Activated T-helper 2 cell treated with anti-CD3 and anti-CD28 coated beads, Interferon-gamma antibody, Interleukin-2, Interleukin-4, amounts not matched to agents 10 μg/mL and 5 μg/mL and 100 μg/mL, durations not matched to agents 14 hours and 24 hours and 36 hours (primary cell): ENCODE measurements at regions of chr19 and their contacts with region 1.

Region 1: DNA sequence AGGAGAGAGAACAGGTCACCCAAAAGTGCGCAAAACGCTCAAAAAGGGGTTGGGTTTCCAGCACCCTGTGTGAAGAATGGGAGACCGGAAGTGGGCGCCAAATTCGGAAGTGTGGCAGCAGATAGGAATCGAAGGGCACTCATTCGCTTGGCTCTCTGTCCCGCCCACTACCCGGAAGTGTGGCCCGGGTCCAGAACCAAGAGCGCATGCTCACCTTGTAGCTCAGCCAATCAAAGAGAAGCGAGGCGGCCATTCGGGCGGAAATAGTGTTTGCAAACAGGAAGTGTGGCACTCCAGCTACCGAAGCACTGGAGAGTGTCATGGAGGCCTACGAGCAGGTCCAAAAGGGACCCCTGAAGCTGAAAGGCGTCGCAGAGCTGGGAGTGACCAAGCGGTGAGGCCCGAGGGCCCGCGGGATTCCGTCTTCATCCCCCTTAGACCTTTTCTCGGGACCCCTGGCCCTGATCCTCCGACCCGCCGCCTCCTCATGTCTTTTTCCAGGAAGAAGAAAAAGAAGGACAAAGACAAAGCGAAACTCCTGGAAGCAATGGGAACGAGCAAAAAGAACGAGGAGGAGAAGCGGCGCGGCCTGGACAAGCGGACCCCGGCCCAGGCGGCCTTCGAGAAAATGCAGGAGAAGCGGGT is at the start of gene FAM32A:
- DNase-seq: peak; percentile 99
- H3K4me3 Mint-ChIP-seq: peak within 1 kb of the TSS; percentile 95
- H3K27ac Mint-ChIP-seq: peak within 1 kb of the TSS; percentile 94
- H3K4me1 Mint-ChIP-seq: peaks cover 14% of the 10 kb centered on the region
- H3K27me3 Mint-ChIP-seq: no peaks in the 10 kb centered on the region
- total RNA-seq, gene FAM32A: 65.6 and 68.6 TPM in 2 replicates

Region 2: GRCh38 chr19:15836595-15837337 is 348.5 kb before region 1 on chr19:
- intact Hi-C with region 1: loop called (anchors 2 kb)
- DNase-seq: peak; percentile 97
- H3K4me3 Mint-ChIP-seq: peak overlapping the region; percentile 94
- H3K27ac Mint-ChIP-seq: peak overlapping the region; percentile 99
- H3K4me1 Mint-ChIP-seq: peaks cover 26% of the 10 kb centered on the region
- H3K27me3 Mint-ChIP-seq: no peaks in the 10 kb centered on the region

Region 3: DNA sequence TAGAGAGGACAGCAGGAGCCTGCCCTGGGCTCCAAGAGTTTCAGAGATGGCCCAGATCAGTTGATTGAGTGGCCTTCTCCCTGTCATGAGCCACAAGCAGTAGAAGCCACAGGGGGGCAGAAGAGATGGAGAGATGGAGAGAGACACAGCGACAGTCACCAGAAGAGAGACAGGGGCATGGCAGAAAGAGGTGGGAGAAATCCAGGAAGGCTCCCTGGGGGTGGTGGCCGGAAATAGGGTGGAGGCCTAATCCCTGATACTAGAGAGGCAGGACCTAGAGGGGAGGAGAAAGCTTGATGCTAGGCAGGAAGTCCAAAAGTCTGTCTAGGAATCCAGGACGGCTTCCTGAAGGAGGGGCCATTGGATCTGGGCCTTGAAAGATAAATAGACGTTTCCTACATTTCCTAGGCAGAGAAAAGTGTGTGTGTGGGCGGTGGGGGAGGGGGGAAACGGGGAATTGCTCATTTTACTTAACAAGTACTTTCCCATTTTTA is 118.6 kb before region 1 on chr19:
- intact Hi-C with region 1: loop called (anchors 2 kb)
- DNase-seq: no peak
- H3K4me3 Mint-ChIP-seq: no peak overlapping the region
- H3K27ac Mint-ChIP-seq: peak overlapping the region; percentile 28
- H3K4me1 Mint-ChIP-seq: peaks cover 21% of the 10 kb centered on the region
- H3K27me3 Mint-ChIP-seq: no peaks in the 10 kb centered on the region

Region 4: DNA sequence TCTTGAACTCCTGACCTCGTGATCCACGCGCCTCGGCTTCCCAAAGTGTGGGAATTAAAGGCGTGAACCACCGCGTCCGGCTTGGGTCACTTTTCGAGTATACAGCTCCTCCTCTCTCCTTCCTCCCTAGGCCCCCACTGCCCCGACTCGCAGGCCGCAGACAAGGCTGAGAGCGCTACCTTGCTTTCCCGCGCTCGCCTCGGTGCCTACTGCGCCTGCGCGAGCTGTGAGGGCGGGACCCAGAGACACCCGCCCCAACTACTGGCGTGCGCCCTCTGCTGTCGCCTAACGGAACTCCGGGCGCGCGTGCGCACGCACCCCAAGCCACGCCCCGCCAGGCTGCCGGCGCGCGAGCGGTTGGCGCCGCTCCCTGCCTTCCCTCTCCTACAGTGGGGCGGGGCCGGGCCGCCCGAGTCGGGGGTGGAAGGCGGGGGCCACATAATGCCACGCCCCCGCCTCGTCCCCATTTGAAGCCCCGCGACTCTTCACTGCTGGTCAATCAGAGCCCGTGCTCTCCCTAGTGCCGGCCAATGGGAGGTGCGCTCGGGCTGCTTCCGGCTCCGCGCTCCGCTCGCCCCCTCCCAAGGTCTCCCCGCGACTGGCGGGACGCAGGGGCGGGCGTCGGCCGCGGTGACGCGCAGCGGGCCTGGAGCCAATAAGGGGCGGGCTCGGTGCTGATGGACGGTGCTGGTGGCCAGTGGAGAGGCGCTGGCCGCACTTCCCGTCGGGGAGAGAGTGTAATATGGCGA is 73.9 kb before region 1 on chr19 and contains the start of gene RAB8A:
- intact Hi-C with region 1: loop called (anchors 1 kb)
- DNase-seq: peak; percentile 99
- H3K4me3 Mint-ChIP-seq: peak within 1 kb of the TSS; percentile 99
- H3K27ac Mint-ChIP-seq: peak within 1 kb of the TSS; percentile 95
- H3K4me1 Mint-ChIP-seq: peaks cover 29% of the 10 kb centered on the region
- H3K27me3 Mint-ChIP-seq: no peaks in the 10 kb centered on the region
- total RNA-seq, gene RAB8A: 256 and 261 TPM in 2 replicates

Region 5: DNA sequence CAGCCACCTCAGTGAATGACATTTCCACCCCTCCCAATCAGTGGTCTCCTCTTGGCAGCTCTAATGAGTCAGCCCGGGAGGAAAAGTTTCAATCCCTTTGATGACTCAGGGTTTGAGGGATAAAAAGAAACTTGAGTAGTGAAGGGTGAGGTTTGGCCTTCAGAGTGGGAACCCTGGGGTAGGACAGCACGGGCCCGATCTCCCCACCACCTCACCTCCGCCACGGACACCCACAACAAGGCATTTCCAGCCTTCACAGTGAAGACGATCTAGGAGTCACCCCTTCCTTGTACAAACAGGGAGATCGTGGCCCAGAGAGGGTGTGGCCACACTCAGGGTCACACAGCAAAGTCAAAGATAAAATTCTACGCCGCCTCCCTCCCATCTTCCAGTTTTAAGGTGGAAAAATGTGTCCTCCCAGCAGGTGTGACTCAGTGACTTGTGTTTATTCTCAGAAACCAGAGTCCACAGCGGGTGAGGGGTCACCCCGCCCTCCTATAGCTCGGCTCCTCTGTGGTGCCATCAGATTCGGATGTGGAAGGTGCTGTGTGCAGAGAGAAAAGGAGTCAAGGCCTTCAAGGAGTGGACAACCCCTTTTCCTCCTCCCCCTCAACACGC is 24.2 kb before region 1 on chr19:
- intact Hi-C with region 1: loop called (anchors 2 kb)
- DNase-seq: no peak
- H3K4me3 Mint-ChIP-seq: peak overlapping the region; percentile 22
- H3K27ac Mint-ChIP-seq: peak overlapping the region; percentile 80
- H3K4me1 Mint-ChIP-seq: peaks cover 18% of the 10 kb centered on the region
- H3K27me3 Mint-ChIP-seq: no peaks in the 10 kb centered on the region